Mammary epithelial cell (primary cell): ENCODE measurements at regions of chr1 and their contacts with region 1.

Region 1: DNA sequence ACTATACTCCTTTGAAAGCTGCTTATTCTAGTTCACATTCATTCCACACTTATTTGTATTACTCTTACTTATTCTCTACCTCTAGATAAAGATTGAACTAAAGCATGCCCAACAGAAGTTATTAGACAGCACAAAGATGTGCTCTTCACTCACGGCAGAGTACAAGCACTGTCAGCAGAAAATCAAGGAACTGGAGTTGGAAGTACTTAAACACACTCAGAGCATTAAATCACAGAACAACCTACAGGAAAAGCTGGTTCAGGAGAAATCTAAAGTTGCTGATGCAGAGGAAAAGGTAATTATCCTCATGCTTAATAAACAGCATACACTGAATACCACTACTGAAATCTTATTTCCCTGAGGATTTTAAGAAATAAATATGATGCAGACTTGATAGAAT is 81.3 kb upstream of the PPIH start:
- DNase-seq: no peak
- H3K4me3 ChIP-seq: no peak overlapping the region
- H3K27ac ChIP-seq: no peak overlapping the region
- H3K4me1 ChIP-seq: no peaks in the 10 kb centered on the region
- H3K27me3 ChIP-seq: no peaks in the 10 kb centered on the region
- CTCF ChIP-seq: no peak

Region 2: DNA sequence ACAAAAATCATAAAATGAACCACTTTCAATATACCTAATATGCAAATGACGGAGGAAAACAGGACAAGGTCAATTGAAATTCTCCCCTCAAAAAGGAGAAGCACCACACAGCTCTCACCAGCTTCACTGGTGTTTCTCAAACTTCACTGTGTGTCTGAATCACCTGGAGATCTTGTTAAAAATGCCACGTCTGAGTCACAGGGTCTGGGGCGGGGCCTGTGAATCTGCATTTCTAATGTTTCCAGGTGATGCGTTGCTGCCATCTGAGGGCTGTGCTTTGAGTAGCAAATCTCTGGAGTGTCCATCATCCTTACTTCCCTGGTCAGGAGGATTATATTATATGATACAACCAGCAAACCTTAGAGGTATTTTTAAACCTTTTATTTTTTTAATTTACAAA is 154.1 kb after region 1 on chr1:
- CTCF ChIA-PET with region 1: no interaction called
- dilution Hi-C with region 1: no loop called
- in situ Hi-C with region 1: loop called in 1 of 2 experiments (anchors 25 kb)
- intact Hi-C with region 1: loop called (anchors 2 kb)
- DNase-seq: peak; percentile 76
- H3K4me3 ChIP-seq: no peak overlapping the region
- H3K27ac ChIP-seq: no peak overlapping the region
- H3K4me1 ChIP-seq: peaks cover 16% of the 10 kb centered on the region
- H3K27me3 ChIP-seq: no peaks in the 10 kb centered on the region
- CTCF ChIP-seq: peak; percentile 42 to 69

Region 3: GRCh38 chr1:42747125-42747524 is 170.2 kb after region 1 on chr1:
- CTCF ChIA-PET with region 1: no interaction called
- dilution Hi-C with region 1: no loop called
- in situ Hi-C with region 1: loop called in 1 of 2 experiments (anchors 25 kb)
- intact Hi-C with region 1: loop called (anchors 1 kb)
- DNase-seq: no peak
- H3K4me3 ChIP-seq: no peak overlapping the region
- H3K27ac ChIP-seq: no peak overlapping the region
- H3K4me1 ChIP-seq: peaks cover 17% of the 10 kb centered on the region
- H3K27me3 ChIP-seq: no peaks in the 10 kb centered on the region
- CTCF ChIP-seq: peak; percentile 43 to 79

Region 4: DNA sequence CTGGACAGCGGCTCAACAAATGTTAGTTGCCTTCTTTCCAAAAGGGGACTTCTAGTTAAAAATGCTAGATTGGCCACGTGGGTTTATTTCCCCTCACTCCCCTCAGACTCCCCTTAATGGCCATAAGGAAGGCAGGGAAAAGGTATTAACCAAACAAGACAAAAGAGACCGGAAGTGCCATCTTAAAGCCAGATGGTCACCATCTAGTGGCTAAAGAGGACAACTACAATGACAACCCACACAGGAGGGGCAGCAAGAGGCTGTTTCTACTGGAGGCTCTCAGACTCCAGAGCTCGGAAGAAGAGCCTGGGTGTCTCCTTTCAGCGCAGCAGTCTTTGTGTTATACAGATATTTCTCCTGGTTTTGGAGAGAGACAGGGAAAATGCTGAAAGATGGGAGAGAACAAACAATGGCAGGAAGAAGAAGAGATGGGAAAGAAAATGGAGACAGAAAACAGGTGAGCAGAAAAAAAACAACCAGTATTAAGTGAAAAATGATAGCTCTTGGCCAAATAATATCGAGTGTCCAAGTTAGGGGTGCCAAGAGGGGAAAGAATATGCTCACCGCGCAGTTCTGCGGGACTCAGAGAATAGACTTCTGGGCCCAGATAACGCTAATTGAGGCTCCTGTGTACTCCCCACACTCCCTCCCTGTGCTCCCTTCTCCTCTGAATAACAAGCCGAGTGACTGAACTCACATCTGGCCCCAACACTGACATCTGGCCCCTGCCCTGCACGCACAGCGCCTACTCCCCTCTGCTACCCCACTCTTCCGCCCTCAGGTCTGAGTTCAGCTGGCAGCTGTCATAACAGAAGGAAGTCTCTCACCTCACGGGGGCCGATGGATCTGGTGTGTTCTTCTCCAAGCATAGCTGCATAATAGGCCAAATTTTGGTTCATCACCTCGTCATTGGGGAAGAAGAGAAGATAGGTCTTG is 180.3 kb after region 1 on chr1:
- CTCF ChIA-PET with region 1: no interaction called
- dilution Hi-C with region 1: no loop called
- in situ Hi-C with region 1: no loop called
- intact Hi-C with region 1: loop called (anchors 2 kb)
- DNase-seq: peak; percentile 49
- H3K4me3 ChIP-seq: no peak overlapping the region
- H3K27ac ChIP-seq: no peak overlapping the region
- H3K4me1 ChIP-seq: peaks cover 8% of the 10 kb centered on the region
- H3K27me3 ChIP-seq: no peaks in the 10 kb centered on the region
- CTCF ChIP-seq: peak; percentile 70 to 80